Ovary (tissue), 10 donors: ENCODE measurements at regions of chr21 and their contacts with region 1.

Region 1: GRCh38 chr21:33019885-33020557 is 5.7 kb upstream of the OLIG2 start:
- DNase-seq: no peak
- H3K4me3 ChIP-seq: no peak overlapping the region
- H3K27ac ChIP-seq: no peak overlapping the region
- H3K4me1 ChIP-seq: no peaks in the 10 kb centered on the region
- H3K27me3 ChIP-seq: peaks cover 2% of the 10 kb centered on the region
- CTCF ChIP-seq: no peak
- EP300 ChIP-seq: no peak
- POLR2A ChIP-seq: no peak

Region 2: GRCh38 chr21:32940079-32941014 is 79.7 kb before region 1 on chr21:
- intact Hi-C with region 1: no loop called
- DNase-seq: peak in 1 of 5 donors; percentile 30
- H3K4me3 ChIP-seq: no peak overlapping the region
- H3K27ac ChIP-seq: no peak overlapping the region
- H3K4me1 ChIP-seq: no peaks in the 10 kb centered on the region
- H3K27me3 ChIP-seq: no peaks in the 10 kb centered on the region
- CTCF ChIP-seq: peak in 1 of 3 donors; percentile 16
- EP300 ChIP-seq: no peak
- POLR2A ChIP-seq: no peak

Region 3: DNA sequence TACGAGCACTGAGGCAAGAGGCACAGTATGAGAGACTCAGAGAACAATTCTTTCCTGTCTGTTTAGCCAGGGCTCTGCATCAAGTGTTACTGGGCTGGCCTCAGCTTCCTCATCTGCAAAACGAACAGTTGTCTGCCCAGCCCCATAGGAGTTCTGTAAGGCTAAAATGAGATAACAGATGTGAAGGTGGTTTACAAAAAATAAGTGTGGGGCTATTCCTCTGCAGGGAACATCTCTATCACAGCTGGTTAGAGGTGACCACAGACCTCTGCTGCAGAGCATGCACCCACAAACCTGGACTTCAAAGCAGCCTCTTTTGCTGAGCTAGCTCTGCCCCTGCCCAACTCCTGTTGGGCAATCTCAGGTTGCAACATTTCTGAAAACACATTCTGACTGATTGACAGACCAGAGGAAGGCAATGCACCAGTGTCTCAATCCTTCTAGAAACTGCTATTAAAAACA is 39.4 kb after region 1 on chr21:
- intact Hi-C with region 1: loop called in 1 of 4 experiments (anchors 5 kb)
- DNase-seq: no peak
- H3K4me3 ChIP-seq: no peak overlapping the region
- H3K27ac ChIP-seq: no peak overlapping the region
- H3K4me1 ChIP-seq: no peaks in the 10 kb centered on the region
- H3K27me3 ChIP-seq: no peaks in the 10 kb centered on the region
- CTCF ChIP-seq: no peak
- EP300 ChIP-seq: no peak
- POLR2A ChIP-seq: no peak

Region 4: DNA sequence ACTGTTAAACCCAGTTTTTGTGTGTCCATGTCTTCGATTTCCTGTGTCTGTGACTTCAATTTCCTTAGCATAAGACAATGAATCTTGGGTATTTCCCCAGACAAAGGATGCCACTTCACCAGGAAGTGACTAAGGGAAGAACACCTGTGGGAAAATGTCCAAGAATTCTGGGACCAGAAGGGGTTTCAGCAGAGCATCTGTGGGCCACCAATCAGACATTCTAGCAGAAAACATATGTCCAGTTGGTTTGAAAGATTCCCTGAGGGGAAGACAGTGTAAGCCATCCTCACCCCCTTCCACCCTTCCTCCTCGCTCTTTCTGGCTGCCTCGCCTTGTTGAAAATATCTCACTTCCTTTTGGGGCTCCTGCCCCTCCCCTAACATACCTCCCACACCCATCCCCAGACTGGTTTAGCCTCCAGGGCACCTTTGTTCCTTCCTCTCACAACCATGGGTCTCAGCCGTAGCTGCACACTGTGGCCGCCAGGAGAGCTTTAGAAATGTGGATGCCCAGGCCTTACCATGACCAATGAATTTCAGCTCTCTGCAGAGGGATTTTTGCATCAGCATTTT is 279.2 kb after region 1 on chr21:
- intact Hi-C with region 1: no loop called
- DNase-seq: no peak
- H3K4me3 ChIP-seq: no peak overlapping the region
- H3K27ac ChIP-seq: no peak overlapping the region
- H3K4me1 ChIP-seq: peaks cover 4% of the 10 kb centered on the region
- H3K27me3 ChIP-seq: no peaks in the 10 kb centered on the region
- CTCF ChIP-seq: no peak
- EP300 ChIP-seq: no peak
- POLR2A ChIP-seq: no peak

Region 5: DNA sequence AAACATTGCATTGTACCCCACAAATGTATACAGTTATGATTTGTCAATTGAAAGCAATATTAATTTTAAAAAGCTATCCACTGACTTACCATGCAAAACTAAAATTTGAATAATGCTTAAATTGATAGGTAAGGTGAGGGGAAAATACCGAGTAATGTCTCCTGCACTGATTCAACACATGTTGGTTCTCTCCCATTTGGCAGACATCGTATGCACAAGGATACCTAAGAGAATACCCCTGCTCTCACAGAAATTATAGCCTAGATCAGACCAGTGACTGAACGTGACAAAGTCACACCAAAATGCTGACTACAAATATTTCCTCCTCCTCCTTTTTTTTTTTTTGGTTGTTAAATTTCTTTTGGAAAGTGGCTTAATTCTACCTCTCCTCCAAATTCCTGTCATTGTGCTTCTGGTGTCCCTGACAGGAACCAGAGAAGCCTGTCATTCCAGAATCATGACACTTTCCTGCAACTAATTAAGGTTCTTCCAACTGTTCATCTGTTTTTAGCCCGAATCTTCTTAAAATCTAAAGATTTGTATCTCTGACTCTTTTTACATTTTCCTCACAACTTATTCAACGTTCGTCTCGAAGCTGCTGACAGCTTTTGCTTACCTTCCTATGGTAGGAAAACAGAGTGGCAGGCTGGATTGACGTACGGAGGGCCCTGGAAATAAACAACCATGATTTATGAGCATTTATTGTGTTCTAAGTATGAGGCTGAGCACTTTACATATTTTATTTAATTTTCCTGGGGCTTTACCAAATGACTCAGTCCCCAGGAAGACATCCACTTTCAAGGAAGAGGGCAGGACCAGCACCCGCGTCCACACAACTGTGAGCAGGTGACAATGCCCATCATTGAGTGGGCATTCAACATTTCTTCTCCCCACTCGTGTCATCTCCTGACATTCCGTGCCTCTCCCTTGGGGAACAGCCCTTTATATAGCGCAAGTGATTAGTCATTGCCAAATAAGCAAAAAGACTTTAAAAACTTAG is 1285.9 kb after region 1 on chr21:
- intact Hi-C with region 1: no loop called
- DNase-seq: no peak
- H3K4me3 ChIP-seq: no peak overlapping the region
- H3K27ac ChIP-seq: no peak overlapping the region
- H3K4me1 ChIP-seq: no peaks in the 10 kb centered on the region
- H3K27me3 ChIP-seq: no peaks in the 10 kb centered on the region
- CTCF ChIP-seq: no peak
- EP300 ChIP-seq: no peak
- POLR2A ChIP-seq: no peak